ENCODE measurements at regions of chr12 and their contacts with region 1.

Region 1: GRCh38 chr12:8681041-8681902 is 16.5 kb upstream of the RIMKLB start:
- DNase-seq: no peak
- ATAC-seq: peak; percentile 51 to 75
- H3K4me3 ChIP-seq: peak overlapping the region in 1 of 4 donors; percentile 30
- H3K27ac ChIP-seq: peak overlapping the region; percentile 36 to 64 (median 54)
- H3K4me1 ChIP-seq: no peaks in the 10 kb centered on the region
- H3K27me3 ChIP-seq: no peaks in the 10 kb centered on the region
- CTCF ChIP-seq: no peak
- POLR2A ChIP-seq: no peak

Region 2: DNA sequence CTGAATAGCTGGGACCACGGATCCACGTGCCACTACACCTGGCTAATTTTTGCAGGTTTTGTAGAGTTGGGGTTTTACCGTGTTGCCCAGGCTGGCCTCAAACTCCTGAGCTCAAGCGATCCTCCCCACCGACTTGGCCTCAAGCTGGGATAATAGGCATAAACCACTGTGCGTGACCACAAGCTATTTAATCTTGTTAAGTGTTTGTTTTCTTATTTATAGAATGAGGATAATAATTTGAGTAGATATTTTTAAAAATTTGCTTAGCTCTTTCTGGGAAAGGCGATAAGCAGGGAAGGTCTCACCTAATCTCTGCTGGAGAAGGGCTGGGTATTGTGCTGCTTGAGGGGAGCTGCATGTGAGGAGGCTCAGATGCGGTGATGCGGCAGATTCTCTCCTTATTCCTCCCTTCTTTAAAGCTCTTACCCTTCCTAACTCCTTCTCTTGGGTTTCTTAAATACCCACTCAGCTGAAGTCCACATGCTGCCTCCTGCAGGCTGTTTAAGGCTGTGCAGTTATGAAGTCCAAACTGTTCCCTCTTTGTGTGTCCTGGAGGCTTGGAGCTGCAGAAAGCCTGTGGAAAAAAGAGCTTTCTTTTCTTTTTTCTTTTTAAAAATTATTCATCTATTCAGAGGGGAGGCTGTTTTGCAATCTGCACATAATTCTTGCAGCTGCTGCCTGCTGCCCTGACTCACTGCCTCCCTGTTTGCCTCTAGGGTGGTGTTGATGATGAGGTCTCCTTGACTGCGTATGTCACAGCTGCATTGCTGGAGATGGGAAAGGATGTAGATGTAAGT is 179.1 kb after region 1 on chr12:
- in situ Hi-C with region 1: no loop called
- intact Hi-C with region 1: loop called (anchors 1 kb)
- DNase-seq: peak in 1 of 2 donors; percentile 19
- ATAC-seq: peak; percentile 16 to 30
- H3K4me3 ChIP-seq: no peak overlapping the region
- H3K27ac ChIP-seq: no peak overlapping the region
- H3K4me1 ChIP-seq: no peaks in the 10 kb centered on the region
- H3K27me3 ChIP-seq: no peaks in the 10 kb centered on the region
- CTCF ChIP-seq: peak in 4 of 5 experiments; percentile 12 to 53 (median 42)
- POLR2A ChIP-seq: no peak

Region 3: DNA sequence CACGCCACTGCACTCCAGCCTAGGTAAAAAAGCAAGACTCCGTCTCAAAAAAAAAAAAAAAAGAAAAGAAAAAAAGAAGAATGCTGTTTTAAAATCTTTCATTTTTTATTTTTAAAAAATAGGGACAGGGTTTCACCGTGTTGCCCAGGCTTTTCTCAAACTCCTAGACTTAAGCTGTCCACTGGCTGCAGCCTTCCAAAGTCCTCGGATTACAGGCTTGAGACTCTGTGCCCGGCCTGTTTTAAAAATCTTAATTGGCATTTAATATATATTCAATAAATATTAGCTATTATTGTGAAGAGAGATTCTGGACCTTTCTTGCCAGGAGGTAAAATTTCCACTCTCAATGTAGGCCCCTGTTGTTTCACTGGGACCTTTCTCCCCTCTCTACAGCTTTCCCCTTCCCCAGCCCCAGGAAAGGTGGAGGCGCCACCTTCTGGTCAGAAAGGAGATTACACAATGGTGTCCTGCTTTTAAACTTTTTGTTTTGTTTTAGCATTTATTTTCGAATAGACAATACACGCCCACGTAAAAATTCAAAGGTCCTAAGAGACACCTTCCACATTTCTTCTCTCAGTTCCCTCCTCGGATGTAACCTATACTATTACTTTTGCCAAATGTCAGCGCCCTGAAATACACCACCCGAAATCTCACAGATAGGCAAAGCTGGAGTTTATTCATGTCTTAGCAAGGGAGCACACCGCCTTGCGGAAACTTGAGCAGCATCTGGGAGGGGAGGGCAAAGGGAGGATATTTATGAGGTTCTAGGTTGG is 209.2 kb after region 1 on chr12:
- in situ Hi-C with region 1: loop called (anchors 5 to 10 kb)
- intact Hi-C with region 1: loop called (anchors 1 kb)
- DNase-seq: peak in 1 of 2 donors; percentile 18
- ATAC-seq: peak; percentile 50 to 79
- H3K4me3 ChIP-seq: peak overlapping the region; percentile 51 to 61 (median 56)
- H3K27ac ChIP-seq: peak overlapping the region in 1 of 4 donors; percentile 13
- H3K4me1 ChIP-seq: peaks cover 0 to 3% of the 10 kb centered on the region in 2 donors
- H3K27me3 ChIP-seq: no peaks in the 10 kb centered on the region
- CTCF ChIP-seq: peak; percentile 63 to 91 (median 76)
- POLR2A ChIP-seq: no peak

Region 4: DNA sequence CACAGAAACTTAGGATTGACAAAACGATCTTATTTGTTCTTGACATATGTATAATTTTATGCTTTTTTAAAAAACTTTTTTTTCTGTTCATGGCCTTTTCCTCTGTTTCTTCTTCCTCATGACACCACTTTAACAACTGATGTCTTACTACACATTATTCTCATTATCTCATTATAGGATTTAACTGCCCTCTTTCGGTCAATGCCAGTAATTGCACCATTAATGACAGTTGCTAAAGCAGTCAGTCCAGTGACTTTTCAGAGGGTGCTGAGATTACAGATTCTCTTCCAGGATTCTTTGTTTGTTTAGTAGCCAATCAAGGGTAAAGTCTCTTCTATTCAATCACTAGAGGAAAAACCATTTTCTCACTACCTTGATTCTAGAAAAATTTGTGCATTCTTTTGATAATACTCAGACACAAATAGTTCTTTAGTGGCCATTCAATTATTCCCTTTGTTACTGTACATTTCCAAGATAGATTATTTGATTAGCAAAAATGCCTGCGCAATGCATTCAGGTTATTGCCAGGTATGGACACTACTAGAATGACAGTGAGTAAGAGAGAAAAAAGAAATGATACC is 358.2 kb after region 1 on chr12:
- in situ Hi-C with region 1: loop called in 2 of 4 experiments (anchors 25 kb)
- intact Hi-C with region 1: loop called (anchors 5 kb)
- DNase-seq: no peak
- ATAC-seq: peak; percentile 54 to 68
- H3K4me3 ChIP-seq: no peak overlapping the region
- H3K27ac ChIP-seq: no peak overlapping the region
- H3K4me1 ChIP-seq: peaks cover 0 to 17% of the 10 kb centered on the region in 2 donors
- H3K27me3 ChIP-seq: no peaks in the 10 kb centered on the region
- CTCF ChIP-seq: peak; percentile 43 to 73 (median 62)
- POLR2A ChIP-seq: no peak

Measured in gastrocnemius medialis (tissue), 4 donors.